ENCODE measurements at regions of chr12 and their contacts with region 1.

Region 1: GRCh38 chr12:111812881-111813741 is 28.9 kb upstream of the MAPKAPK5 start:
- DNase-seq: peak; percentile 81
- ATAC-seq: peak; percentile 98
- H3K4me3 Mint-ChIP-seq: no peak overlapping the region
- H3K27ac Mint-ChIP-seq: no peak overlapping the region
- H3K4me1 Mint-ChIP-seq: peaks cover 2% of the 10 kb centered on the region
- H3K27me3 Mint-ChIP-seq: no peaks in the 10 kb centered on the region

Region 2: DNA sequence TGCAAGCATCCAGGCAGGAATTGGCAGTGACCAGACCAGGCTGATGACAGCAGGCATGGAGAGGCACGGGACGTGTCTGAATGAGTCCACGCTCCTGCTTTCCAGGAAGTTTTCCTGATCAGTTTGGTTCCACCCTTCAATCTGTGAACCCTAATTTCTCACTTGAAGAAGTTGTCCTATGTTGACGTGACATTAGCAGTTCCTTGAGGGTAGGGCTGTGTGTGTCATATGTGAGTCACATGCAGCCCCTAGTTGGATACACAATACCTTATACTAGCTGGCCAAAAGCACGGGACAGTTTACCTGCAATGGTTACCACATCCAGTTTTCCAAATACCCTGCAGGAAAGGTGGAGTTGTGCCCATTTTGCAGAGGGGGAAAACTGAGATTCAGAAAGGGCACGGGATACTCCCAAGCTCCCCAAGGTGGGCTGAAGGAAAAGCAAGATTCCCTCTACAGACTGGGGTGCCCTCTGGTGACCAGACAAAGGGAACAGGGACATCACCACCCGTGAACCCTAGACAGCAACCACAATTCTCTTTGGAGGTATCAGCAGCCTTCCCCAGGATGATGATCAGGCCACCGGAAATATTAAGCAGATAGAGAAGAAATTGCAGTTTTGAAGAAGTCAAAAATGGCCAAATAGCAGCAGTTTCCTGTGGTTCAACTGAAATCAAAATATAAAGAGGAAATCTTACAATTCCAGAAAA is 638.7 kb before region 1 on chr12:
- CTCF ChIA-PET with region 1: no interaction called
- POLR2A ChIA-PET with region 1: no interaction called
- intact Hi-C with region 1: no loop called
- DNase-seq: peak; percentile 9
- ATAC-seq: no peak
- H3K4me3 Mint-ChIP-seq: no peak overlapping the region
- H3K27ac Mint-ChIP-seq: no peak overlapping the region
- H3K4me1 Mint-ChIP-seq: no peaks in the 10 kb centered on the region
- H3K27me3 Mint-ChIP-seq: peaks cover 12% of the 10 kb centered on the region

Region 3: GRCh38 chr12:111685744-111686517 is 127.2 kb before region 1 on chr12 and contains the starts of genes ACAD10 and BRAP:
- CTCF ChIA-PET with region 1: interaction called, 3 read pairs
- POLR2A ChIA-PET with region 1: no interaction called
- intact Hi-C with region 1: loop called (anchors 1 to 2 kb)
- DNase-seq: peak; percentile 95
- ATAC-seq: peak; percentile 97
- H3K4me3 Mint-ChIP-seq: peak within 1 kb of the TSS; percentile 89
- H3K27ac Mint-ChIP-seq: peak within 1 kb of the TSS; percentile 91
- H3K4me1 Mint-ChIP-seq: peaks cover 31% of the 10 kb centered on the region
- H3K27me3 Mint-ChIP-seq: no peaks in the 10 kb centered on the region
- total RNA-seq, gene ACAD10: 25.5 to 27.5 TPM
- total RNA-seq, gene BRAP: 18.3 to 23.6 TPM

Region 4: DNA sequence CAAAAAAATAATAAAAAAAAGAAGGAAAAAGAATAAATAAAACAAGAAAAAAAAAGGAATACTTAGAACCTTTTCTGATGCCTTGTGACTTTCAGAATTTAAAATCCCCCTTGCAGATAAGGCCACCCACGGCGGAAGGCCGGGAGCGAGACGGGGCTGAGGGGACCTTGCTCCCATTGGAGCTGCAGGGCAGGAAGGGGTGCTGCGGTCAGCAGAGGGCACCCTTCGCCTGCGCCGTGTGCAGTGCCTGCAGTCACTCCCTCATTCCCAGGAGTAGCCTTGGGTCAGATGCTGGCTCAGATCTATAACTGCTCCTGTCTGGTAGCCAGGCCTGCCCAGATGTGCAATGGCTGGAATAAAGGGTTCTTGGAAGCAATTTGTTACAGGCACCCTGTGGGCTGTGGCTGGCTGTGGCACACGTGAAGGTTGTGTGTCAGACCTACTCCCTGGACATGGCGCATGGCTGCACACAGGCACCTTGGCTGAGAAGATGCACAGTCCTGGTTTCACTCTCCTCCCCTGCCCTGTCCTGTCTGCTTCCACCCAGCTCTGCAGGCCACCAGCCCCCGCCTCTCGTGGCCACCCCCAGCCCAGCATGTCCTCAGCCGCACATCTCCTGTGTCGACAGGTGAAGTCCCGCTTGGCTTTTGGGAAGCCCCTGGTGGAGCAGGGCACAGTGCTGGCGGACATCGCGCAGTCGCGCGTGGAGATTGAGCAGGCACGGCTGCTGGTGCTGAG is 59.8 kb before region 1 on chr12:
- CTCF ChIA-PET with region 1: interaction called, 15 read pairs
- POLR2A ChIA-PET with region 1: interaction called, 8 read pairs
- intact Hi-C with region 1: loop called (anchors 1 to 2 kb)
- DNase-seq: no peak
- ATAC-seq: no peak
- H3K4me3 Mint-ChIP-seq: no peak overlapping the region
- H3K27ac Mint-ChIP-seq: no peak overlapping the region
- H3K4me1 Mint-ChIP-seq: peaks cover 6% of the 10 kb centered on the region
- H3K27me3 Mint-ChIP-seq: no peaks in the 10 kb centered on the region

Region 5: GRCh38 chr12:111766608-111767361 is 46.3 kb before region 1 on chr12 and contains the start of gene ALDH2:
- CTCF ChIA-PET with region 1: interaction called, 15 read pairs
- POLR2A ChIA-PET with region 1: no interaction called
- intact Hi-C with region 1: loop called in 1 of 2 experiments (anchors 5 kb)
- DNase-seq: peak; percentile 63
- ATAC-seq: peak; percentile 70
- H3K4me3 Mint-ChIP-seq: peak within 1 kb of the TSS; percentile 75
- H3K27ac Mint-ChIP-seq: peak within 1 kb of the TSS; percentile 72
- H3K4me1 Mint-ChIP-seq: peaks cover 14% of the 10 kb centered on the region
- H3K27me3 Mint-ChIP-seq: peaks cover 32% of the 10 kb centered on the region
- total RNA-seq, gene ALDH2: 6.1 to 6.2 TPM

Region 6: DNA sequence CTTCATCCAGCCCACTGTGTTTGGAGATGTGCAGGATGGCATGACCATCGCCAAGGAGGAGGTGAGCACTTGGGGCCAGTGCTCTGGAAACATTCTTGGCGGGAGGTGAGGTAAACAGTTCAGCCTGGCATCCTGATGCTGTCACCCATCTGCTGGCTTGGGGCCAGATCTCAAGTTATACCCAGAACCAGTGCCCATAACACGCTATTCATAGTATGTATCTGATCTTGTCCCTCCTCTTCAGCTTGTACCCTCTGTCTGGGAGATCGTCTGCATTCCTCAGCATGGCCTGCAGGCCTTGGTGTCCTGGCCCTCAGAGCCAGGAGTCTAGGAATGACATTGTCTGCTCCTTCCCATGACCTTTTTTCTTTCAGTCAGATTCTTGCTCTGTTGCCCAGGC is 14.9 kb before region 1 on chr12:
- CTCF ChIA-PET with region 1: interaction called, 18 read pairs
- POLR2A ChIA-PET with region 1: no interaction called
- intact Hi-C with region 1: no loop called
- DNase-seq: no peak
- ATAC-seq: no peak
- H3K4me3 Mint-ChIP-seq: no peak overlapping the region
- H3K27ac Mint-ChIP-seq: no peak overlapping the region
- H3K4me1 Mint-ChIP-seq: no peaks in the 10 kb centered on the region
- H3K27me3 Mint-ChIP-seq: no peaks in the 10 kb centered on the region

Region 7: DNA sequence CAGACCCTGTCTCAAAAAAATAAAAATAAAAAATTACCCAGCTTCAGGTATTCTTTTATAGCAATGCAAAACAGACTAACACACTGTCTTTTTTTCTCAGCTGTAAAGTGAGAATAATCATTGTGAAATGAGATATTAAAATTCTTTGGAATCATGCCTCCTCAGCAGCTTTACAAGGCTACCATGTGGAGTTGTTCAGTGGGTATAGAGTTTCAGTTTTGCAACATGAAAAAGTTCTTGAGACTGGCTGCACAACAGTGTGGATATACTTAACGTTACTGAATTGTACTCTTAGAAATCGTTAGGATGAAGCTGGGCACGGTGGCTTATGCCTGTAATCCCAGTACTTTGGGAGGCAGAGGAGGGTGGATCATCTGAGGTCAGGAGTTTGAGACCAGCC is 13.2 kb after region 1 on chr12:
- CTCF ChIA-PET with region 1: interaction called, 11 read pairs
- POLR2A ChIA-PET with region 1: no interaction called
- intact Hi-C with region 1: no loop called
- DNase-seq: no peak
- ATAC-seq: no peak
- H3K4me3 Mint-ChIP-seq: no peak overlapping the region
- H3K27ac Mint-ChIP-seq: no peak overlapping the region
- H3K4me1 Mint-ChIP-seq: no peaks in the 10 kb centered on the region
- H3K27me3 Mint-ChIP-seq: peaks cover 4% of the 10 kb centered on the region